Heart left ventricle (tissue), 16 donors: ENCODE measurements at regions of chr5 and their contacts with region 1.

Region 1: DNA sequence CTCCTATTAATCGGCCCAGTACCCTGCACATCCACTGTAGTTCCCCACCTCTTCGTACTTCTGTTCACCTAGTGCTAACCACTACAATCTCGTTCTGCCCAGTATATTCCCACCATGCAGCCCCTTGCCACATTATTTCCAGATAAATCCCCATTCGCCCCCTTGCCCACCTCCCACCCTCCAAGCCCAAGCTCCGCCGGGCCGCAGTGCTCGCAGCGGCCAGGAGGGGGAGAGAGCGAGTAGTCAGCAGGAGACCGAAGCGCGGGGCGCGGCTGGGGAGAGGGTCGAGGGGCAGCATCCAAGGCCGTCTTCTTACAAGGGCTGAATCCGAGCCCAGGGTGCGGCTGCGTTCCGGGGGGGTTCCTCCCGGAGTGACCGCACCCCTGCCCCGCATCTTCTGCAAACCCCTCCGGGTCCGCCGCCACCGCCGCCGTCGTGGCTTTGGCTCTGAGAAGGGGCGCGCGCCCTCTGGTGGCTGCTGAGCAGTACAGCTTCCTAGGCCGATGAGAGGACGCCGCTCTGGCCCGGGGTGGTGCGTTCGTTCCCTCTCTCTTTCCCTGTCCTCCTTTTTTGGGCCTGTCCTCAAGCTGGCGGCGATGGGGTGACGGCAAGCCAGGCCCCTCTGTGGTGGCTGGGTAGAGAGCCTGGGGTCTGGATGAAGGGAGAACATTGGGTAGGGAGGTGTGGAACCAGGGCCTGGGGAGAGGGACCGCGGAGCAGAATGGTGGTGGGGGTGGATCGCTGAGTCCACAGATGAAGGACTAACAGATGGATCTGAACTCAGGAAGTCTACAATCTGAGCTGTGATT is 30.0 kb upstream of the PSD2 start:
- DNase-seq: peak; percentile 81 to 90 (median 82)
- ATAC-seq: peak; percentile 81 to 89 (median 85)
- H3K4me3 ChIP-seq: peak overlapping the region; percentile 32 to 74 (median 57)
- H3K27ac ChIP-seq: peak overlapping the region in 3 of 12 donors; percentile 24 to 52 (median 35)
- H3K4me1 ChIP-seq: peaks cover 0 to 33% (median 12%) of the 10 kb centered on the region in 12 donors
- H3K27me3 ChIP-seq: peaks cover 0 to 26% (median 19%) of the 10 kb centered on the region in 9 donors
- CTCF ChIP-seq: peak in 11 of 12 donors; percentile 93 to 100 (median 99)
- POLR2A ChIP-seq: peak in 1 of 2 donors; percentile 32

Region 2: DNA sequence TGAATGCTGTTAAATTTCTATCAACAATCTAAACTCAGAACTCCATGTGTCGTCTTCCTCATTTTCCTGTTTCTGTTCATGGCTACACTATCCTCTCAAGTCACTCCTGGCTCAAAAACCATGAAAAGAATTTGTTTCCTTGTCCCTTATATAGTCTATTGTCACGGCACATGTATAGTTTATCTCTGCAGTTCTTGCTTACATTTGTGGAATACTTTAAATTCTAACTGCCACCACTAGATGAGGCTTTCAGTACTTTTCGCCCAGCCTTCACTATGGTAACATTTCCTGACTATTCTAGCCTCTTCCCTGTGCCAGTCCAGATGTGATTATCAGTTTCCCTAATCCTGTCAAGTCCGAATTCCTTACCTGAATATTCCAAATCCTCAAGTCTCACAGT is 1841.8 kb before region 1 on chr5:
- intact Hi-C with region 1: no loop called
- DNase-seq: no peak
- ATAC-seq: no peak
- H3K4me3 ChIP-seq: no peak overlapping the region
- H3K27ac ChIP-seq: no peak overlapping the region
- H3K4me1 ChIP-seq: peaks cover 0 to 5% (median 0%) of the 10 kb centered on the region in 12 donors
- H3K27me3 ChIP-seq: no peaks in the 10 kb centered on the region
- CTCF ChIP-seq: no peak
- POLR2A ChIP-seq: no peak

Region 3: GRCh38 chr5:139422307-139422893 is 343.2 kb before region 1 on chr5:
- intact Hi-C with region 1: loop called in 3 of 10 experiments (anchors 10 kb)
- DNase-seq: no peak
- ATAC-seq: peak in 2 of 4 donors; percentile 29 to 40
- H3K4me3 ChIP-seq: no peak overlapping the region
- H3K27ac ChIP-seq: no peak overlapping the region
- H3K4me1 ChIP-seq: peaks cover 6 to 39% (median 27%) of the 10 kb centered on the region in 12 donors
- H3K27me3 ChIP-seq: no peaks in the 10 kb centered on the region
- CTCF ChIP-seq: peak; percentile 67 to 94 (median 82)
- POLR2A ChIP-seq: no peak

Region 4: DNA sequence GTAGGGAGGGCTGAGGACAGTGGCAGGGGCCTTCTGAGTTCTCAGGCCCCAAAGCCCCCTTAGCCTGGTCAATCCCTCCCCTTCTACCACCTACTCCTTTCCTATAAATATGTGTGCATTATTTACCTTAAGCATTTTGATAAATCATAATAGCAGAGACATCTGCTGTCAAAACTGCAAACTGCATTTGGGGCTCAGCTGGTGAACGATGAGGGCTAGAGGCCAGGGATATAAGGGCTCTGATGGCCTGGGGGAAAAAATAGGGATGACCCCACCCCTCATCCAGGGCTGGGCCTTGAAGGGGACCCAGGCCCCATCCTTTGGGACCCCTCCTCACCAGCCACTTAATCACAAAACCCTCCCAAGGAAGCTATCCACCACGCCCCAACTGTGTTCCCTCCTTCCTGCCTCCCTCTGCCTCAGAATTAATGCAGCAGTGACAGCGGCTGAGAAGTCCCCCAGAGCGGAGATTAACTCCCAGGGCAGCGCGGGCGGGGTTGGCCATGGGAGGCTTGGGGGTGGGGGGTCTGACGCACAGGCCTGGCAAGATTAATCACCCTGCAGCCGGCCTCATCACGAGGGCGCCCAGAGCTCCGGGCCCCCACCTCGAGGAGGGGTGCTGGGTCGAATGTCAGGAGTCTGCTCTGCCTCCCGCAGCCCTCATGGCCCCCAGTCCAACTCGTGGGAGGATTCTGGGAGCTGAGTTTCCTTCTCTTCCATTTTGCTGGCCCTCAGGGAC is 75.4 kb before region 1 on chr5:
- intact Hi-C with region 1: loop called in 4 of 10 experiments (anchors 2 to 10 kb)
- DNase-seq: peak in 2 of 5 donors; percentile 49 to 56
- ATAC-seq: peak in 3 of 4 donors; percentile 1 to 40 (median 18)
- H3K4me3 ChIP-seq: no peak overlapping the region
- H3K27ac ChIP-seq: peak overlapping the region in 8 of 12 donors; percentile 16 to 64 (median 31)
- H3K4me1 ChIP-seq: peaks cover 0 to 76% (median 42%) of the 10 kb centered on the region in 12 donors
- H3K27me3 ChIP-seq: no peaks in the 10 kb centered on the region
- CTCF ChIP-seq: peak; percentile 13 to 74 (median 62)
- POLR2A ChIP-seq: no peak

Region 5: GRCh38 chr5:139696894-139697658 is 68.5 kb before region 1 on chr5:
- intact Hi-C with region 1: loop called in 4 of 10 experiments (anchors 5 to 10 kb)
- DNase-seq: peak; percentile 89 to 90 (median 89)
- ATAC-seq: peak; percentile 71 to 86 (median 82)
- H3K4me3 ChIP-seq: peak overlapping the region in 11 of 12 donors; percentile 3 to 64 (median 52)
- H3K27ac ChIP-seq: peak overlapping the region; percentile 82 to 97 (median 89)
- H3K4me1 ChIP-seq: peaks cover 7 to 64% (median 45%) of the 10 kb centered on the region in 12 donors
- H3K27me3 ChIP-seq: peaks cover 0 to 14% (median 0%) of the 10 kb centered on the region in 9 donors
- CTCF ChIP-seq: no peak
- POLR2A ChIP-seq: no peak

Region 6: GRCh38 chr5:139711067-139711905 is 54.3 kb before region 1 on chr5:
- intact Hi-C with region 1: loop called in 4 of 10 experiments (anchors 2 to 10 kb)
- DNase-seq: peak in 3 of 5 donors; percentile 47 to 56 (median 51)
- ATAC-seq: peak in 2 of 4 donors; percentile 16 to 24
- H3K4me3 ChIP-seq: peak overlapping the region; percentile 33 to 65 (median 58)
- H3K27ac ChIP-seq: peak overlapping the region in 9 of 12 donors; percentile 24 to 88 (median 77)
- H3K4me1 ChIP-seq: peaks cover 14 to 37% (median 33%) of the 10 kb centered on the region in 12 donors
- H3K27me3 ChIP-seq: peaks cover 0 to 26% (median 0%) of the 10 kb centered on the region in 9 donors
- CTCF ChIP-seq: peak in 3 of 12 donors; percentile 4 to 12 (median 6)
- POLR2A ChIP-seq: no peak